Activated naive CD4-positive, alpha-beta T cell treated with anti-CD3 and anti-CD28 coated beads for 36 hours (primary cell): ENCODE measurements at regions of chr1 and their contacts with region 1.

Region 1: DNA sequence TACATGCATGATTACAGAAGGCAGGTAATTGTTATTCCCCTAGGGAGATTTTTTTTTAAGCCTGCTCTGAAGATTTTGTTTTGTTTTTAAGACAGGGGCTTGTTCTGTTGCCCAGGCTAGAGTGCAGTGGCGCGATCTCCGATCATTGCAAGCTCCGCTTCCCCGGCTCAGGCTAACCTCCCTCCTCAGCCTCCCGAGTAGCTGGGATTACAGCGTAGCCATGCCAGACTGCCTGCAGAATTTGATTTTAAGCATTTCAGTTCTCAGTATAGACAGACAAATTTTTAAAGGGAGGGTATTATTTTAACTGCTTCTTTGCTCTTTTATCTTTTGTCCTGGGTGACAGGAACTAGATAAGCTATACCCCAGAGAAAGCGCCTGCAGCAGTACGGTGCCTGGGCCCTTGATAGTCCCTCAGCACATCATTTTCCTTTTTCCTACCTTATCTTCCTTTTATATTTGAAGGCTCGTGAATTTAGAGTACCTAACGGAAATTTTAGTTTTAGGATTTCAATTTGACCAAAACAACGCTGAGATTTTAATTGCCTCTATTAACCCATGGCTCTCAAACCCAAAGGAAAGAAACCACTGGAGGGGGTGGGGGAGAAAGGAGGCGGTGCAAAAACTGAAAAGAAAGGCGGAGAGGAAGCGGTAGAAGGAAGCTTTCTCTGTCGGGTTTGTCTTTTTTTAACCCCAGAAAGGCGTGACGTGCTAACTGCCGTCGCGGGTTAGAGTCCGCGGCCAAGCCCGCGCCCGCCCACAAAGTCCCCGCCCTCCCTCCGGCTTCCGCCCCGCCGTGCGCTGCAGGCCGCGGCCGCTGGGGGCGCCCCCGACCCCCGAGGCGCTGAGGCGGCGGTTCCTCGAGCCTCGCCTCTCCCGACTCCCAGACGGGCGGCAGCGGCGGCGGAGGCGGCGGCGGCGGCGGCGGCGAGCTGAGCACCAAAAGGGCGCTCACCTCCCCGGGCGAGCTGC is at the start of gene EEIG2:
- DNase-seq: peak; percentile 92
- H3K4me3 Mint-ChIP-seq: peak within 1 kb of the TSS; percentile 94
- H3K27ac Mint-ChIP-seq: peak within 1 kb of the TSS; percentile 81
- H3K4me1 Mint-ChIP-seq: peaks cover 29% of the 10 kb centered on the region
- H3K27me3 Mint-ChIP-seq: no peaks in the 10 kb centered on the region
- total RNA-seq, gene EEIG2: 7.6 to 7.9 TPM

Region 2: DNA sequence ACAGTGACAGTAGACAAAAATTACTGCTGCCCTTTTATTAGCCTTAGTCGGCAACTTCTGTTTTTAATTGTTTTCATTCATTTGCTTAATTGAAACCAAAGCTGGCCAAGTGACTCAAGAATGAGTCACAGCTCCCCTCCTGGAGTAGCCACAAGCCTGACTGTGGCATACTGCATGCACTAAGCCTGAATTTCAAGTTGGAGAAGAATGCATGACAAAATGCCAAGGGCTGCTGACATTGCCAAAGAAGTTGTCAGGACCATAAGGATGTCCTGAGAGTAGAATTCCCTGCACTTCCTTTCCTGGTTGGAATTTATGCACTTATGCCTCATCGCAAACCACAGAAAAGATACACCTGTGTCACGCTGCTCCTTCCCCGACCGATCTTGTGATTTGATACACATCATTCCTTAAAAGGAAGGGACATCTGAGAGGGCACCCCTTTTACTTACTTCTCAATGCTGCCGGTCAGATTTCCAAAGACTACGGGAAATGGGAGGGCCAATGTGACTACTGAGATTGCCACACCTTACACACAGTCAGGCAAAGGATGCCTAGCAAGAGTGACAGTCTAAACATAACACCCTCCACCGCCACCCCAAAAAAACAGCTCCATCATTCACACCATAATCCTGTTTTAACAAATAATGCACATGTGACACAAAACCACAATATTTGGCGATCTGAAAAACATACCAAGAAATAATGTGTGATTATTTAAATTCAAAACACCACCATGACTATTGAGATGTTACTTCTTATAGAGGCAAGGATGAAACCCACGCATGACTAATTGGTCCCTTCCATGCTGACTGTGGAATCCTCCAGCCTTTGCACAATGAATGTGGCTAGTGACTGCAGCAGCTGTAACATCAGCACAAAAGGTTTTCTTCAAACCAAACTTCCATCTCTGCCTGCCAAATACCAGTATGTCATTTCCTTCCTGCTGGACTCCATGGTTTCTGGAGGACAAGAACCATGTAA is 622.7 kb before region 1 on chr1:
- CTCF ChIA-PET with region 1: no interaction called
- intact Hi-C with region 1: loop called (anchors 10 kb)
- DNase-seq: peak; percentile 71
- H3K4me3 Mint-ChIP-seq: no peak overlapping the region
- H3K27ac Mint-ChIP-seq: no peak overlapping the region
- H3K4me1 Mint-ChIP-seq: peaks cover 58% of the 10 kb centered on the region
- H3K27me3 Mint-ChIP-seq: no peaks in the 10 kb centered on the region

Region 3: DNA sequence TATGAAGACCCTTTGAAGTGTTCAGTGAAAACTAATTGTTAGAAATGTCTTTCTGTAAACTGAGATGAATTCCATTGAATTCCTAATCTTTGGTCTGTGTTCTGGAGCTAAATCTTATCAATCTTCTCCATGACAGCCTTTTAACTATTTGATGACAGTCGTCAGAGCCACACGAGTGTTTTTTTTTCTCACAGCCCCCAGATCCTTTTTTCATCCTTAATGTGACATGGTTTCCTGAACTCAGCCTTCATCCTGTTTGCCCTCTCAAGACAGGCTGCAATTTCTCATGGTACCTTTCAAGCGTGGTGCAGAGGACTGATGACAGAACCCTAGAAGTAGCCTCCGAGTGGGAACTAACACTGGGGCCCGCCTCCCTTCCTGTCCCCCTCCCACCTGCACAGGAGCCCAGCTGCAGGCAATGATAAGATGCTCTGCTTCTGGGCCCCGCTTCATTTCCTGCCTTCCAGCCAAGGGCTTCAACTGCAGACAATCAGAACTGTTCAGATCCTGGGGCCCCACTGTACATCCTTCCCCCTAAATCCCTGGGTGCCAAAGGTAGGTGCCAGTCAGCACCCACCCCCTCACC is 480.0 kb before region 1 on chr1:
- CTCF ChIA-PET with region 1: no interaction called
- intact Hi-C with region 1: no loop called
- DNase-seq: peak; percentile 82
- H3K4me3 Mint-ChIP-seq: no peak overlapping the region
- H3K27ac Mint-ChIP-seq: peak overlapping the region; percentile 84
- H3K4me1 Mint-ChIP-seq: peaks cover 66% of the 10 kb centered on the region
- H3K27me3 Mint-ChIP-seq: no peaks in the 10 kb centered on the region

Region 4: DNA sequence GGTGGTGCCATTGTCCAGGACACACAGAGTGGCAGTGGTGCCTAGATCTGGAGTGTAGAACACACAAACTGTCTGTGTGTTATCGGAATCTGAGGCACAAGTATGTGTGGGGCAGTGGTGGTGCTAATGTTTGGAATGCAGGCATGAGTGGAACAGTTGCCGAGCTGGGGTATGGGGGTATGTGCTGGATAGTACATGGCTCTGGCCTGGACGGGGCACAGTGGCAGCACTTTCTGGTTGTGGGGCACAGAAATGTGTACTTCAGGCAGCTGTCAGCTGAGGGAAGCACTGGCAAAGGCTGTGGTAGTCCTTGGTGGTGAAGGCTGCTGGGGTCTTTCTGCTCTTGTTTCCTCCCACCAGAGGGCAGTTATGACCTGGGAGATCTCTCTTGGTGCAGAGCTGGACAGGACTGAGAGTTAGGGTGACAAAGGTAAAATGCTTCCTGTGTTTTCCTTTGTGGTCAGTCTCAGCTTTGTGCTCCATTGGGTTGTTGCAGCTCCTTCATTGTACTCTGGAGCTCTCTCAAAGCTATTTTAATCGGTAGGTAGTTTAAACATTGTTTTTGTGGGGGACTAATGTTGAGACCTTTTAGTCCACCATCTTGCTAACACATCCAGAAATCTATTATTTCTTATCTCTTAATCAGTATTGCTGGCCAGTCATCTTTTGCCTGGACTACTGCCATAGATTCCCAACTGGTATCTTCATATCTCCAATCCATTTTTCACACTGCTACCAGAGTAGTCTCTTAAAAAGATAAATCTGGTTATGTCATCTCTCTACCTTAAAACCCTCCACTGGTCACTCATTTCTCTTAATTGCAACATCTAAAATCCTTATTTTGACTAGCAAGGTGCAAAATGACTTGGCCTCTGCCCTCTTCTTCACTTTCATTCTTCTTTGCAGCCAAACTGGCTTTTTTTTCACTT is 231.7 kb before region 1 on chr1:
- CTCF ChIA-PET with region 1: interaction called, 4 read pairs
- intact Hi-C with region 1: loop called (anchors 5 kb)
- DNase-seq: no peak
- H3K4me3 Mint-ChIP-seq: no peak overlapping the region
- H3K27ac Mint-ChIP-seq: no peak overlapping the region
- H3K4me1 Mint-ChIP-seq: no peaks in the 10 kb centered on the region
- H3K27me3 Mint-ChIP-seq: peaks cover 24% of the 10 kb centered on the region

Region 5: DNA sequence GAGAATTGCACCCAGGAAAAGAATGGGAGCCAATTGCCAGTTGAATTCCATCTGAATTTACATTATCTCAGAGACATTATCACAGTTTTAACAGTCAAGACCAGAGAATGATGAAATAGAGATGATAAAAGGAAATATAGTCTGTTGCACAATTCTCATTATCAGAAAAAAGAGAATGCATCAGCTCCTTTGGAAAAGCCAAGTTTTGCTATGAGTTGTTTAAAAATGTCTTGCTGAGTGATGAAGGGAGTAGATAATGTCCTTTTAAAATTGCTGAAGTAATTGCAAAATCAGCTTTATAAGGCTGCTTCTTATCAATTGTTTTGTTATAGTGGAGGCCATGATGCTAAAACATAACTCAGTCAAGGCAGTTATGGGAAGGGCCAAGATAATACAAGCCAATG is 37.5 kb before region 1 on chr1:
- CTCF ChIA-PET with region 1: interaction called, 16 read pairs
- intact Hi-C with region 1: no loop called
- DNase-seq: no peak
- H3K4me3 Mint-ChIP-seq: no peak overlapping the region
- H3K27ac Mint-ChIP-seq: no peak overlapping the region
- H3K4me1 Mint-ChIP-seq: no peaks in the 10 kb centered on the region
- H3K27me3 Mint-ChIP-seq: peaks cover 4% of the 10 kb centered on the region

Region 6: GRCh38 chr1:108643492-108644335 is 84.2 kb after region 1 on chr1:
- CTCF ChIA-PET with region 1: interaction called, 87 read pairs
- intact Hi-C with region 1: loop called (anchors 1 kb)
- DNase-seq: peak; percentile 71
- H3K4me3 Mint-ChIP-seq: no peak overlapping the region
- H3K27ac Mint-ChIP-seq: no peak overlapping the region
- H3K4me1 Mint-ChIP-seq: peaks cover 60% of the 10 kb centered on the region
- H3K27me3 Mint-ChIP-seq: no peaks in the 10 kb centered on the region

Region 7: GRCh38 chr1:108877348-108878159 is 318.1 kb after region 1 on chr1:
- CTCF ChIA-PET with region 1: no interaction called
- intact Hi-C with region 1: loop called (anchors 2 kb)
- DNase-seq: no peak
- H3K4me3 Mint-ChIP-seq: peak overlapping the region; percentile 89
- H3K27ac Mint-ChIP-seq: no peak overlapping the region
- H3K4me1 Mint-ChIP-seq: peaks cover 4% of the 10 kb centered on the region
- H3K27me3 Mint-ChIP-seq: peaks cover 25% of the 10 kb centered on the region